Endothelial cell of umbilical vein (primary cell): ENCODE measurements at regions of chr1 and their contacts with region 1.

Region 1: GRCh38 chr1:54488779-54489626 is 59.0 kb upstream of the ACOT11 start:
- DNase-seq: peak; percentile 80
- H3K4me3 ChIP-seq: peak overlapping the region; percentile 41 to 85 (median 66)
- H3K27ac ChIP-seq: peak overlapping the region; percentile 87
- H3K4me1 ChIP-seq: peaks cover 17% of the 10 kb centered on the region
- H3K27me3 ChIP-seq: no peaks in the 10 kb centered on the region
- CTCF ChIP-seq: peak; percentile 88 to 91
- POLR2A ChIP-seq: no peak

Region 2: DNA sequence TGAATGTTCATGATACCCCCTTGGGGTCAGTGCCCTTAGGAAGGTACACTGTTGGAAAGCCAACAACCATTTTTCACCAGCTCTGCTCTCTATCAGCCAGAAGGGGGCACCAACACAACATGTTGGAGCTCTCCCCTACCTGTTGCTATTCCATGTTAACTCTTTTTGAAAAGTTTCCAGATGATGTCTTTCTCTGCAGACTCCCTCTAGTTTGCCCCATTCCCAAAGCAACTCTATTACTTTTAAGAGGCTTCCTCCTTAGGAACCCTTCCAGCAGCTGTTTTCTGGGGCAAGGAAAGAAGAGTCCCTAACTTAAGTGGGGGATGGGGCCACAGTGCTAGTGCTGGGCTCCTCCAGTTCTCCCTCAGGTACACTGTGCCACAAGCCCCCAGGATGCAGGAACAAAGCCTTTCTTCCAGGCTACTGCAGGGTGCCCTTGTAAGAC is 628.0 kb before region 1 on chr1:
- CTCF ChIA-PET with region 1: interaction called, 4 read pairs
- POLR2A ChIA-PET with region 1: no interaction called
- dilution Hi-C with region 1: no loop called
- intact Hi-C with region 1: loop called (anchors 2 kb)
- DNase-seq: peak; percentile 51
- H3K4me3 ChIP-seq: no peak overlapping the region
- H3K27ac ChIP-seq: no peak overlapping the region
- H3K4me1 ChIP-seq: no peaks in the 10 kb centered on the region
- H3K27me3 ChIP-seq: no peaks in the 10 kb centered on the region
- CTCF ChIP-seq: peak; percentile 79 to 85
- POLR2A ChIP-seq: no peak

Region 3: GRCh38 chr1:54070171-54070837 is 418.7 kb before region 1 on chr1:
- CTCF ChIA-PET with region 1: interaction called, 8 read pairs
- POLR2A ChIA-PET with region 1: no interaction called
- dilution Hi-C with region 1: no loop called
- intact Hi-C with region 1: loop called (anchors 1 kb)
- DNase-seq: peak; percentile 69
- H3K4me3 ChIP-seq: no peak overlapping the region
- H3K27ac ChIP-seq: no peak overlapping the region
- H3K4me1 ChIP-seq: no peaks in the 10 kb centered on the region
- H3K27me3 ChIP-seq: no peaks in the 10 kb centered on the region
- CTCF ChIP-seq: peak; percentile 44 to 54
- POLR2A ChIP-seq: no peak

Region 4: DNA sequence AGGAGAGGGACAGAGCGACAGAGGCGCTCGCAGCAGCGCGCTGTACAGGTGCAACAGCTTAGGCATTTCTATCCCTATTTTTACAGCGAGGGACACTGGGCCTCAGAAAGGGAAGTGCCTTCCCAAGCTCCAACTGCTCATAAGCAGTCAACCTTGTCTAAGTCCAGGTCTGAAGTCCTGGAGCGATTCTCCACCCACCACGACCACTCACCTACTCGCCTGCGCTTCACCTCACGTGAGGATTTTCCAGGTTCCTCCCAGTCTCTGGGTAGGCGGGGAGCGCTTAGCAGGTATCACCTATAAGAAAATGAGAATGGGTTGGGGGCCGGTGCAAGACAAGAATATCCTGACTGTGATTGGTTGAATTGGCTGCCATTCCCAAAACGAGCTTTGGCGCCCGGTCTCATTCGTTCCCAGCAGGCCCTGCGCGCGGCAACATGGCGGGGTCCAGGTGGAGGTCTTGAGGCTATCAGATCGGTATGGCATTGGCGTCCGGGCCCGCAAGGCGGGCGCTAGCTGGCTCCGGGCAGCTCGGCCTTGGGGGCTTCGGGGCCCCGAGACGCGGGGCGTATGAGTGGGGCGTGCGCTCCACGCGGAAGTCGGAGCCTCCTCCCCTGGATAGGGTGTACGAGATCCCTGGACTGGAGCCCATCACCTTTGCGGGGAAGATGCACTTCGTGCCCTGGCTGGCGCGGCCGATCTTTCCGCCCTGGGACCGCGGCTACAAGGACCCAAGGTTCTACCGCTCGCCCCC is 289.1 kb before region 1 on chr1 and contains the starts of genes CYB5RL and MRPL37:
- CTCF ChIA-PET with region 1: interaction called, 9 read pairs
- POLR2A ChIA-PET with region 1: no interaction called
- dilution Hi-C with region 1: no loop called
- intact Hi-C with region 1: loop called (anchors 5 kb)
- DNase-seq: peak; percentile 97
- H3K4me3 ChIP-seq: peak within 1 kb of the TSS; percentile 58 to 67 (median 58)
- H3K27ac ChIP-seq: peak within 1 kb of the TSS; percentile 55
- H3K4me1 ChIP-seq: peaks cover 19% of the 10 kb centered on the region
- H3K27me3 ChIP-seq: no peaks in the 10 kb centered on the region
- CTCF ChIP-seq: no peak
- POLR2A ChIP-seq: peak; percentile 83
- total RNA-seq, gene CYB5RL: 8.6 and 9.6 TPM in 2 replicates
- total RNA-seq, gene MRPL37: 109 TPM in 2 replicates

Region 5: DNA sequence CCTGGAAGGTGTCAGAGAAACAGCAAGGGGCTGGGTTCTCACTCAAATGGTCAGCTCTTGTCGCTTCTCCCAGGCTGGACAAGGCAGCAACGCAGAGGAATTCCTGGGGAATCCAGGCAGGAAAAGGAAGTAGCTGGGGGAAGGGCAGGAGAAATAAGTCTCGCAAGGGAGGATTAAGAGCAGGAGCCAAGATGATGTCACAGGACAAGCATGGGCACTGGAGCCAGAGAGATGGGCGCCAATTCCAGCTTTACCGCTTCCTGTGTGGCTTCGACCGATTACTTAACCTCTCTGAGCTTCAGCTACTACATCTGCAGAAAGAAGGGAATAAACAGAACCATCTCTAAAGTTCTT is 153.3 kb before region 1 on chr1:
- CTCF ChIA-PET with region 1: interaction called, 5 read pairs
- POLR2A ChIA-PET with region 1: no interaction called
- dilution Hi-C with region 1: no loop called
- intact Hi-C with region 1: loop called (anchors 1 kb)
- DNase-seq: peak; percentile 90
- H3K4me3 ChIP-seq: peak overlapping the region in 1 of 3 experiments; percentile 18
- H3K27ac ChIP-seq: peak overlapping the region; percentile 89
- H3K4me1 ChIP-seq: peaks cover 31% of the 10 kb centered on the region
- H3K27me3 ChIP-seq: no peaks in the 10 kb centered on the region
- CTCF ChIP-seq: no peak
- POLR2A ChIP-seq: peak; percentile 75

Region 6: DNA sequence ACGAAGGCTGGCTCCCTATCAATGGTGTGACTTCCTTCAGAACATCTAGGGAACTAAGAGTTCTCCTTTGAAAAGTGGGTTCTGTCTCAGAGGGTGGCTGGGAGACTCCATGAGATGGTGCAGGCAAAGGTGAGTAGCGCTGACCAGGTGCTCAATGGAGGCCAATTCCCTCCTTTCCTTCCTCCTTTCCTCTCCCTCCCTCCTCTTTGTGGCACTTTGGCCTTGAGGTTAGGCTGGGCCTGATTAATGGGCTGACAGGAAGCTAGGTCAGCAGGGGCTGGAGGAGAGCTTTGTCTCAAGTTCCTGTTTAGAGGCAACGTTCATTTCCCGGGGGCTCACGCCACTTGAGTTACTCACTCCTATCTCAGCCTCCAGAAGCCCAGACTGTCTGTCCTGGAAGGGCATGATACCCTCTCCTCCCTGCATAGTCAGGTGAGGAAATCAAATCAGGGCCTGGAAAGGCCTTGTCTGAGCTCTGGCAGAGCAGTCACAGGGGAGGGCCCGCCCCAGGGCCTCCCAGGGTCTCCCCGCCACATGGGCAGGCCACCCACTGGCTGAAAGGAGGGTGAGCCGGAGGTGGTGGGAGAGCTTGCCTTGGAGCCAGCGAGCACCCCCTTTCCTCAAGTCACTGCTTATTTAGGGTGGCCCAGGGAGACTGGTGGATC is 24.4 kb before region 1 on chr1:
- CTCF ChIA-PET with region 1: interaction called, 8 read pairs
- POLR2A ChIA-PET with region 1: no interaction called
- dilution Hi-C with region 1: no loop called
- intact Hi-C with region 1: loop called (anchors 1 kb)
- DNase-seq: peak; percentile 66
- H3K4me3 ChIP-seq: no peak overlapping the region
- H3K27ac ChIP-seq: peak overlapping the region; percentile 74
- H3K4me1 ChIP-seq: peaks cover 37% of the 10 kb centered on the region
- H3K27me3 ChIP-seq: no peaks in the 10 kb centered on the region
- CTCF ChIP-seq: no peak
- POLR2A ChIP-seq: no peak

Region 7: GRCh38 chr1:54738244-54738643 is 249.2 kb after region 1 on chr1:
- CTCF ChIA-PET with region 1: no interaction called
- POLR2A ChIA-PET with region 1: no interaction called
- dilution Hi-C with region 1: no loop called
- intact Hi-C with region 1: no loop called
- DNase-seq: no peak
- H3K4me3 ChIP-seq: no peak overlapping the region
- H3K27ac ChIP-seq: no peak overlapping the region
- H3K4me1 ChIP-seq: no peaks in the 10 kb centered on the region
- H3K27me3 ChIP-seq: no peaks in the 10 kb centered on the region
- CTCF ChIP-seq: no peak
- POLR2A ChIP-seq: no peak